ENCODE measurements at regions of chr7 and their contacts with region 1.

Region 1: DNA sequence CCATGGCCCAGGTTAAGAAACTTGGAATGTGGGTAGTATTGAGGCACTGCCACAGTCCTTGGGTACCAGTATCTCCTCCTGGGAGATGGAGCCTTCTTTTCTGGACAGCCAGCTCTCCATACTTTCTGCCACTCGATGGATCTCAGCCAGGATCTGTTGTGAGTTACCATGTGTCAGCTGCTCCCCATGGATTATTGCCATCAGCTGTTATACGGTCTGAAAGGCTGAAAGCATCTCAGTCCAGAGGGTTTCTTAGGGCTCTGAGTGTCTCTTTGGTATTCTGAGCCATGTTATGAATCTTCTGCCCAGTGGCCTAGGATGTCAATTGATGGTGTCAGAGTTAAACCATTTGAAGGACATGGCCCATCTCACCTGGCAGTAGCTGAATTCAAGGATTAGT is 197.5 kb downstream of the C7orf25 start:
- DNase-seq: no peak
- H3K4me3 ChIP-seq: no peak overlapping the region
- H3K27ac ChIP-seq: no peak overlapping the region
- H3K4me1 ChIP-seq: no peaks in the 10 kb centered on the region
- H3K27me3 ChIP-seq: no peaks in the 10 kb centered on the region
- CTCF ChIP-seq: no peak

Region 2: GRCh38 chr7:42805622-42806021 is 91.3 kb after region 1 on chr7:
- CTCF ChIA-PET with region 1: no interaction called
- dilution Hi-C with region 1: no loop called
- in situ Hi-C with region 1: no loop called
- intact Hi-C with region 1: loop called (anchors 10 kb)
- DNase-seq: peak; percentile 2
- H3K4me3 ChIP-seq: no peak overlapping the region
- H3K27ac ChIP-seq: no peak overlapping the region
- H3K4me1 ChIP-seq: no peaks in the 10 kb centered on the region
- H3K27me3 ChIP-seq: no peaks in the 10 kb centered on the region
- CTCF ChIP-seq: no peak